CD14-positive monocyte (primary cell): ENCODE measurements at regions of chr6 and their contacts with region 1.

Region 1: DNA sequence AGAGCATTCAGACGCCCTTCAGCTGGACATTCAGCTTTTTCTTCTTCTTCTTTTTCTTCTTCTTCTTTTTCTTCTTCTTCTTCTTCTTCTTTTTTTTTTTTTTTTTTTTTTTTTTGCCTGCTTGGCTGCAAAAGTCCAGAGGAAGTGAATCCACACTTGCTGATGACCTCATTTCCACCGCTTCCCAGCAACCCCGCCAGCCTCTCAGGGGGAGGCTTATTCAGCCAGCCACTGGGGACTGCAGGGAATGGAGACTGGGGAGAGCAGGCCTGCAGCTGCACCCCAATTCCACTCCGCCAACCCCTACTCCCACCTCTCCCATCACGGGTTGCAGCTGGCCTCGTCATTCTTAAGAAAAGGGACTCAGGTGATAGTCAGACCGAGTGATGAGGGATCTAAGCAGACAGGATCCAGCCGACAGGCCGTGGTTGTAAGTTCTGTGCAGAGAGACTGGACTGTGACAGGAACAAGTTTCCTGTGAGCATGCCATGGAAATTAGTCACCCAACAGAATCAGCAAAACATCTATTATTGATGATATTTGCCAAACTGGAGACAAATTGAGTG is 59.0 kb upstream of the QKI start:
- DNase-seq: peak; percentile 76 to 94 (median 84)
- H3K4me3 ChIP-seq: peak overlapping the region; percentile 17 to 70 (median 31)
- H3K4me3 Mint-ChIP-seq: peak overlapping the region; percentile 43 to 87
- H3K27ac ChIP-seq: peak overlapping the region; percentile 94 to 97
- H3K27ac Mint-ChIP-seq: peak overlapping the region in 1 of 7 donors; percentile 98
- H3K4me1 ChIP-seq: peaks cover 61 to 62% of the 10 kb centered on the region in 2 donors
- H3K4me1 Mint-ChIP-seq: peaks cover 56% of the 10 kb centered on the region
- H3K27me3 ChIP-seq: no peaks in the 10 kb centered on the region
- H3K27me3 Mint-ChIP-seq: peaks cover 0 to 3% (median 0%) of the 10 kb centered on the region in 3 donors
- CTCF ChIP-seq: no peak

Region 2: GRCh38 chr6:163405412-163406309 is 50.2 kb after region 1 on chr6:
- intact Hi-C with region 1: loop called (anchors 5 kb)
- DNase-seq: peak; percentile 84 to 87 (median 87)
- H3K4me3 ChIP-seq: peak overlapping the region; percentile 31 to 65 (median 47)
- H3K4me3 Mint-ChIP-seq: peak overlapping the region; percentile 87 to 94
- H3K27ac ChIP-seq: peak overlapping the region; percentile 96 to 98
- H3K27ac Mint-ChIP-seq: peak overlapping the region; percentile 99 to 100 (median 100)
- H3K4me1 ChIP-seq: peaks cover 45 to 49% of the 10 kb centered on the region in 2 donors
- H3K4me1 Mint-ChIP-seq: peaks cover 64% of the 10 kb centered on the region
- H3K27me3 ChIP-seq: no peaks in the 10 kb centered on the region
- H3K27me3 Mint-ChIP-seq: peaks cover 0 to 2% (median 1%) of the 10 kb centered on the region in 3 donors
- CTCF ChIP-seq: no peak

Region 3: DNA sequence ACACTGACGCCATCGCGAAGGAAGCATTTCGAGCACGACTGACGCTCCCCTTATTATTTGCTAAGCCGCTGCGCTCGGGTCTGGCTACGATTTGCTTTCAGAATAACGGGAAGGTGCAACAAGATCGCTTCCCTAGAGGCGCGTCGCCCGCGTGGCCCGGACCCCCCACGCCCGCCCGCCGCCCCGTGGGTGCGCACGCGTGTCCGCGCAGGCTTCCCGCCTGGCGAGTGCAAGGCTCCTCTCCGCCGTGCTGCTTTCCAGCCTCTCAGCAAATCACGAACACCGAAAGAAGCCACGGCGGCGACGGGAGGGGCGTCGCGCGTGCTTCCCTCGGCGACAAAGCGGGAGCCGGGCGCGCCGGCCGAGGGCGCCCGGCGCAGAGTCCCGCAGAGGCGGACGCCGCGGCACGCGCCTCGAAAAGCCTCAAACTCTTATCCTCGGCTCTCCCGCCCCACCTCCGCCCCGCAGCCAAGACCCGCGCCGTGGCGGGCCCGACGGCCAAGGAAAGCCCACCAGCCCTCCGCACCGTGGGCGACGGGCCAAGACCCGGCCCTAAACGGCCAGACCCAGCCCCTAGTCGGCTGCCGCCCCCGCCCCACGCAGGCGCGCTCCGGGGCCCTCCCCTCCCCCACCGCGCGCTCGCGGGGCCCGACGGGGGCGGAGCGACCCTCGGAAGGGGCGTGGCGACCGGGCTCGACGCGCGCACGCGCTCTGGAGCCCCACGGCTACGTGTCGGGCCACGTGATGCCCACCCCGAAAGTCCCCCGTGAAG is 58.0 kb after region 1 on chr6:
- intact Hi-C with region 1: loop called (anchors 5 kb)
- DNase-seq: peak; percentile 93 to 94 (median 94)
- H3K4me3 ChIP-seq: peak overlapping the region; percentile 40 to 75 (median 67)
- H3K4me3 Mint-ChIP-seq: peak overlapping the region; percentile 79 to 93
- H3K27ac ChIP-seq: peak overlapping the region; percentile 92 to 97
- H3K27ac Mint-ChIP-seq: peak overlapping the region; percentile 96 to 99 (median 98)
- H3K4me1 ChIP-seq: peaks cover 16 to 32% of the 10 kb centered on the region in 2 donors
- H3K4me1 Mint-ChIP-seq: peaks cover 27% of the 10 kb centered on the region
- H3K27me3 ChIP-seq: no peaks in the 10 kb centered on the region
- H3K27me3 Mint-ChIP-seq: peaks cover 0 to 3% (median 2%) of the 10 kb centered on the region in 3 donors
- CTCF ChIP-seq: no peak

Region 4: DNA sequence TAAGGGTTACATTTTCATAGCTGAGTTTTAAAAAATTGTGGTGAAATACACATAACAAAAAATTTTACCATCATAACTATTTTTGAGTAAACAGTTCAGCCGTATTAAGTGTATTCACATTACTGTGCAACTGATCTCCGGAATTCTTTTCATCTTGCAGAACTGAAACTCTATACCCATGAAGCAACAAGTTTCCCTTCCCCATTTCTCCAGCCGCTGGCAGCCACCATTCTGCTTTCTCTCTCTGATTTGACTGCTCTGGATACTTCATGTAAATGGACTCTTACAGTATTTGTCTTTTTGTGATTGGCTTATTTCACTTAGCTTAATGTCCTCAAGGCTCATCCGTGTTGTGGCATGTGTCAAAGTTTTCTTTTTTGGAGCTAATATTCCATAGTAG is 400.6 kb after region 1 on chr6:
- intact Hi-C with region 1: loop called in 1 of 2 experiments (anchors 5 kb)
- DNase-seq: peak; percentile 84 to 93 (median 87)
- H3K4me3 ChIP-seq: peak overlapping the region in 1 of 3 experiments; percentile 54
- H3K4me3 Mint-ChIP-seq: peak overlapping the region in 1 of 2 donors; percentile 74
- H3K27ac ChIP-seq: peak overlapping the region; percentile 74 to 81
- H3K27ac Mint-ChIP-seq: peak overlapping the region; percentile 87 to 97 (median 95)
- H3K4me1 ChIP-seq: peaks cover 43 to 52% of the 10 kb centered on the region in 2 donors
- H3K4me1 Mint-ChIP-seq: peaks cover 53% of the 10 kb centered on the region
- H3K27me3 ChIP-seq: no peaks in the 10 kb centered on the region
- H3K27me3 Mint-ChIP-seq: peaks cover 12 to 14% (median 13%) of the 10 kb centered on the region in 3 donors
- CTCF ChIP-seq: no peak

Region 5: GRCh38 chr6:164109770-164110140 is 754.2 kb after region 1 on chr6:
- intact Hi-C with region 1: no loop called
- DNase-seq: no peak
- H3K4me3 ChIP-seq: peak overlapping the region in 1 of 3 experiments; percentile 62
- H3K4me3 Mint-ChIP-seq: peak overlapping the region in 1 of 2 donors; percentile 81
- H3K27ac ChIP-seq: no peak overlapping the region
- H3K27ac Mint-ChIP-seq: peak overlapping the region in 3 of 7 donors; percentile 89 to 93 (median 90)
- H3K4me1 ChIP-seq: peaks cover 17 to 19% of the 10 kb centered on the region in 2 donors
- H3K4me1 Mint-ChIP-seq: peaks cover 22% of the 10 kb centered on the region
- H3K27me3 ChIP-seq: no peaks in the 10 kb centered on the region
- H3K27me3 Mint-ChIP-seq: peaks cover 14 to 34% (median 27%) of the 10 kb centered on the region in 3 donors
- CTCF ChIP-seq: peak; percentile 22